SK-N-SH (cell line): ENCODE measurements at regions of chr1 and their contacts with region 1.

Region 1: GRCh38 chr1:205791568-205792180 is 16.4 kb upstream of the RAB29 start:
- DNase-seq: peak; percentile 82
- H3K4me3 ChIP-seq: no peak overlapping the region
- H3K27ac ChIP-seq: no peak overlapping the region; a peak in 1 of 4 replicates
- H3K4me1 ChIP-seq: peaks cover 0 to 3% of the 10 kb centered on the region in 2 experiments; a peak in 1 of 4 replicates
- H3K27me3 ChIP-seq: no peaks in the 10 kb centered on the region
- CTCF ChIP-seq: peak; percentile 86
- EP300 ChIP-seq: no peak
- RAD21 ChIP-seq: peak; percentile 94

Region 2: GRCh38 chr1:205805082-205805712 is 13.5 kb after region 1 on chr1:
- CTCF ChIA-PET with region 1: interaction called, 39 read pairs
- POLR2A ChIA-PET with region 1: no interaction called
- DNase-seq: no peak
- H3K4me3 ChIP-seq: no peak overlapping the region
- H3K27ac ChIP-seq: no peak overlapping the region
- H3K4me1 ChIP-seq: peaks cover 0 to 18% of the 10 kb centered on the region in 2 experiments; a peak in 1 of 4 replicates
- H3K27me3 ChIP-seq: no peaks in the 10 kb centered on the region
- CTCF ChIP-seq: no peak
- EP300 ChIP-seq: no peak
- RAD21 ChIP-seq: no peak

Region 3: GRCh38 chr1:205896320-205896719 is 104.6 kb after region 1 on chr1:
- CTCF ChIA-PET with region 1: interaction called, 13 read pairs
- POLR2A ChIA-PET with region 1: no interaction called
- DNase-seq: no peak
- H3K4me3 ChIP-seq: no peak overlapping the region
- H3K27ac ChIP-seq: no peak overlapping the region
- H3K4me1 ChIP-seq: peaks cover 0 to 8% of the 10 kb centered on the region in 2 experiments; a peak in 2 of 4 replicates
- H3K27me3 ChIP-seq: no peaks in the 10 kb centered on the region
- CTCF ChIP-seq: no peak
- EP300 ChIP-seq: no peak
- RAD21 ChIP-seq: no peak

Region 4: GRCh38 chr1:205919026-205919746 is 127.5 kb after region 1 on chr1:
- CTCF ChIA-PET with region 1: interaction called, 116 read pairs
- POLR2A ChIA-PET with region 1: no interaction called
- DNase-seq: peak; percentile 79
- H3K4me3 ChIP-seq: no peak overlapping the region; a peak in 1 of 4 replicates
- H3K27ac ChIP-seq: no peak overlapping the region
- H3K4me1 ChIP-seq: peaks cover 0 to 7% of the 10 kb centered on the region in 2 experiments; a peak in 1 of 4 replicates
- H3K27me3 ChIP-seq: no peaks in the 10 kb centered on the region
- CTCF ChIP-seq: peak; percentile 81
- EP300 ChIP-seq: no peak
- RAD21 ChIP-seq: peak; percentile 92

Region 5: DNA sequence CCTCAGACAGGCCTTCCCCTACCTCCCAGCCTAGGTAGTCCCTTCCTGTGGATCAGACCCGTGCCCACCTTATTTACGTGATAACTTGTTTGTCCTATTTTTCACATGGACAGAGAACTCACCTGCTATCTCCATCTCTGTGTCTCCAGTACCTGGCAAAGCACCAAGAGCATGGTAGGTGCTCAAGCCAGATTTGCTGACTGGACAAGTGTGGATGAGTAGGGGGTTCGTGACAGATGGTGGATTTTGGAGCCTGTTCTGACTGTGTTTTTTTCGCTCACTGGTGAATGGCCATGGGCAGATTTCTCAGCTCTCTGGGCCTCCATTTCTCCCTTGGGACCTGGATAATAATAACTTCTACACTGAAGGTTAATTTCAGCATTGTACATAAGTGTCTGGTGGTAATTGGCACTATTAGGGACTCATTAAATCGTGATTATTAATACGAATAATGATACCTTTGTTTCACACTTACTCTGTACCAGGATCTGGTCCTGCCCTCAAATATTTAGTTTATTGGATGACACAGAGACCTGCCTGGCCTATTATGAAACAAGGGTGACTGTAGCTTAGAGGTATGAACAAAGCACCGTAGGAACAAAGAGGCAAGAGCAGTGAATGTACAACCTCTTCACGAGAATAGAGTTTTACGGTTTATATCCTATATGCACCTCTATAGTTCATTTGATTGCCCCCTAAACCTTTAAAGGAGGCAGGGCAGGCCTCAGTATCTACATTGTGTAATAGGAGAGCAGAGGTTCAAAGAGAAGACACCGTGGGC is 176.1 kb after region 1 on chr1:
- CTCF ChIA-PET with region 1: interaction called, 12 read pairs
- POLR2A ChIA-PET with region 1: no interaction called
- DNase-seq: no peak
- H3K4me3 ChIP-seq: no peak overlapping the region
- H3K27ac ChIP-seq: no peak overlapping the region
- H3K4me1 ChIP-seq: no peaks in the 10 kb centered on the region
- H3K27me3 ChIP-seq: no peaks in the 10 kb centered on the region
- CTCF ChIP-seq: no peak
- EP300 ChIP-seq: no peak
- RAD21 ChIP-seq: no peak

Region 6: GRCh38 chr1:206106328-206107167 is 314.9 kb after region 1 on chr1:
- CTCF ChIA-PET with region 1: interaction called, 12 read pairs
- POLR2A ChIA-PET with region 1: no interaction called
- DNase-seq: peak; percentile 84
- H3K4me3 ChIP-seq: no peak overlapping the region; a peak in 1 of 4 replicates
- H3K27ac ChIP-seq: no peak overlapping the region
- H3K4me1 ChIP-seq: no peaks in the 10 kb centered on the region
- H3K27me3 ChIP-seq: peaks cover 11% of the 10 kb centered on the region; the same call in 1 of the 2 replicates
- CTCF ChIP-seq: peak; percentile 90
- EP300 ChIP-seq: no peak
- RAD21 ChIP-seq: peak; percentile 92